ENCODE measurements at regions of chr7 and their contacts with region 1.

Region 1: GRCh38 chr7:148230296-148230695 is 360.3 kb upstream of the C7orf33 start:
- DNase-seq: no peak
- H3K4me3 ChIP-seq: no peak overlapping the region
- H3K4me3 Mint-ChIP-seq: no peak overlapping the region
- H3K27ac ChIP-seq: no peak overlapping the region
- H3K27ac Mint-ChIP-seq: no peak overlapping the region
- H3K4me1 ChIP-seq: no peaks in the 10 kb centered on the region
- H3K4me1 Mint-ChIP-seq: no peaks in the 10 kb centered on the region
- H3K27me3 ChIP-seq: no peaks in the 10 kb centered on the region
- H3K27me3 Mint-ChIP-seq: peaks cover 0 to 4% of the 10 kb centered on the region in 2 donors

Region 2: GRCh38 chr7:148242294-148242801 is 12.1 kb after region 1 on chr7:
- CTCF ChIA-PET with region 1: interaction called, 14 read pairs
- POLR2A ChIA-PET with region 1: no interaction called
- intact Hi-C with region 1: no loop called
- DNase-seq: peak in 1 of 5 donors; percentile 4
- H3K4me3 ChIP-seq: no peak overlapping the region
- H3K4me3 Mint-ChIP-seq: peak overlapping the region in 1 of 8 donors; percentile 5
- H3K27ac ChIP-seq: no peak overlapping the region
- H3K27ac Mint-ChIP-seq: no peak overlapping the region
- H3K4me1 ChIP-seq: no peaks in the 10 kb centered on the region
- H3K4me1 Mint-ChIP-seq: peaks cover 0 to 5% (median 3%) of the 10 kb centered on the region in 4 donors
- H3K27me3 ChIP-seq: no peaks in the 10 kb centered on the region
- H3K27me3 Mint-ChIP-seq: peaks cover 12 to 17% of the 10 kb centered on the region in 2 donors